Gastrocnemius medialis (tissue), 4 donors: ENCODE measurements at regions of chr11 and their contacts with region 1.

Region 1: DNA sequence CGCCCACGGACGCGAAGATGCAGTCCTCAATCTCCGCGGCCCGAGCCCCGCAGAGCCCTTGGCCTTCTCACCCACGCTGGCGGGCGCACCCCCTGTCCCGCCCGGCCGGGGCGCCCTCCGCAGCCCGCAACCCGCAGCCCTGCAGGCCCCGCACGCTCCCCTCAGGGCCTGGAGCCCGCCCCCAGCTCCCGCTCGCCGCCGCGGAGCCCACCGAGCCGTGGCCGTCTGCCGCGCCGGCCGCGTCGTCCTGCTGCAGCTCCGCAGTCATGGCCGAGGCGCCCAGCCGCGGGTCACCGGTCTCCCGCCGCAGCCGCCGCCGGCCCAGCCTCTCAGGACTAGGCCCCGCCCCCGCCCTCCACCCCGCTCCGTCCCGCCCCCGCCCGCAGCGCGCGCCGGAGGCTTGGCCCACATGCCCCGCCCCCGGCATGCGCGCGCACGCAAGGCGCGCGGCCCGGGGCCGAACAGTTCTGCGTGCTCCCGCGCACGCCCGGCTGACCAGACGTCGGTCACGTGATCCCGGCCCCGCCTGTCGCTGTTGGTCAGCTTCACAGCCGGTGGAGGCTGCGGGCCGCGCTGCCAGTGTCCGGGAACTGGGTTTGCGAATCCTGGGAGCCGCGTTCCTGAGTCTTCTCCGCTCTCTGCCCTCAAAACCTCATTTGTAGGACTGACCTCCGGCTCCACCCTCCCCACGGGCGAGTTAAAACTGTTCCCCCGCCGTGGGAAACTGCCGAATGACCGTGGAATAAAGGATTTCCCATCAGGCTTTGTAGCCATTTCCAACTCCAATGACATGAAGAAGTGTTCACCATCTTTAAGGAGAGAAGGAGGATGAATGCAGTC is at the start of gene USP28:
- DNase-seq: peak; percentile 96 to 97
- ATAC-seq: peak; percentile 74 to 75
- H3K4me3 ChIP-seq: peak within 1 kb of the TSS; percentile 71 to 85 (median 80)
- H3K27ac ChIP-seq: peak within 1 kb of the TSS; percentile 92 to 99 (median 96)
- H3K4me1 ChIP-seq: peaks cover 38 to 43% of the 10 kb centered on the region in 2 donors
- H3K27me3 ChIP-seq: no peaks in the 10 kb centered on the region
- CTCF ChIP-seq: peak in 3 of 5 experiments; percentile 13 to 44 (median 15)
- POLR2A ChIP-seq: peak; percentile 93 to 98
- total RNA-seq, gene USP28: 56.7 to 141 (median 80.4) TPM

Region 2: GRCh38 chr11:113942256-113942655 is 66.8 kb after region 1 on chr11:
- in situ Hi-C with region 1: no loop called
- intact Hi-C with region 1: no loop called
- DNase-seq: no peak
- ATAC-seq: no peak
- H3K4me3 ChIP-seq: no peak overlapping the region
- H3K27ac ChIP-seq: no peak overlapping the region
- H3K4me1 ChIP-seq: no peaks in the 10 kb centered on the region
- H3K27me3 ChIP-seq: no peaks in the 10 kb centered on the region
- CTCF ChIP-seq: no peak
- POLR2A ChIP-seq: no peak

Region 3: DNA sequence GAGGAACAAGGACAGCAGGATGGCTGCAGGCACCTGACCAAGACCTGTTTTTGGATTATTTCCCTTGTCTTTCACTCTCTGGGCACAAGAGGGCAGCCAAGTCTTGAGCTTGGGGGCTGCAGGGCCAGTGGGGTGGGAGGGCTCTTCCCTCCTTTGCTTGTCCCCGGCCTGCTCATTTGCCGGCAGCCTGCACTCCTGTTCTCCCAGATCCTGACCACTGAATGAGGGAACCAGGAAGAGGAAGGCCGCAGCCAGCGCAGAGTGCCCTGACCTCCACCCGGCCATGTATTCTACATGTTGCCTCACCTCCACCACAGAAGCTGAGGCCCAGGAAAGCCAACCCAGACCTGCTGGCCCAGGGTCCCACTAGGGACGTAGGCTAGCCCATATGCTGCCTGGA is 405.2 kb after region 1 on chr11:
- in situ Hi-C with region 1: loop called in 2 of 4 experiments (anchors 25 kb)
- intact Hi-C with region 1: no loop called
- DNase-seq: peak in 1 of 2 donors; percentile 61
- ATAC-seq: peak; percentile 7 to 29
- H3K4me3 ChIP-seq: no peak overlapping the region
- H3K27ac ChIP-seq: peak overlapping the region in 3 of 4 donors; percentile 33 to 56 (median 39)
- H3K4me1 ChIP-seq: peaks cover 8 to 10% of the 10 kb centered on the region in 2 donors
- H3K27me3 ChIP-seq: no peaks in the 10 kb centered on the region
- CTCF ChIP-seq: peak in 4 of 5 experiments; percentile 29 to 61 (median 42)
- POLR2A ChIP-seq: no peak